Activated CD4-positive, alpha-beta memory T cell treated with anti-CD3 and anti-CD28 coated beads, Interleukin-2, amount 10 ng/mL, durations not matched to agents 7 days and 5 days (primary cell): ENCODE measurements at regions of chr3 and their contacts with region 1.

Region 1: GRCh38 chr3:129249276-129250065 is at the start of gene COPG1:
- DNase-seq: peak; percentile 90
- H3K4me3 Mint-ChIP-seq: peak within 1 kb of the TSS; percentile 86
- H3K27ac Mint-ChIP-seq: peak within 1 kb of the TSS; percentile 92
- H3K4me1 Mint-ChIP-seq: peaks cover 63% of the 10 kb centered on the region
- H3K27me3 Mint-ChIP-seq: no peaks in the 10 kb centered on the region
- total RNA-seq, gene COPG1: 157 TPM

Region 2: DNA sequence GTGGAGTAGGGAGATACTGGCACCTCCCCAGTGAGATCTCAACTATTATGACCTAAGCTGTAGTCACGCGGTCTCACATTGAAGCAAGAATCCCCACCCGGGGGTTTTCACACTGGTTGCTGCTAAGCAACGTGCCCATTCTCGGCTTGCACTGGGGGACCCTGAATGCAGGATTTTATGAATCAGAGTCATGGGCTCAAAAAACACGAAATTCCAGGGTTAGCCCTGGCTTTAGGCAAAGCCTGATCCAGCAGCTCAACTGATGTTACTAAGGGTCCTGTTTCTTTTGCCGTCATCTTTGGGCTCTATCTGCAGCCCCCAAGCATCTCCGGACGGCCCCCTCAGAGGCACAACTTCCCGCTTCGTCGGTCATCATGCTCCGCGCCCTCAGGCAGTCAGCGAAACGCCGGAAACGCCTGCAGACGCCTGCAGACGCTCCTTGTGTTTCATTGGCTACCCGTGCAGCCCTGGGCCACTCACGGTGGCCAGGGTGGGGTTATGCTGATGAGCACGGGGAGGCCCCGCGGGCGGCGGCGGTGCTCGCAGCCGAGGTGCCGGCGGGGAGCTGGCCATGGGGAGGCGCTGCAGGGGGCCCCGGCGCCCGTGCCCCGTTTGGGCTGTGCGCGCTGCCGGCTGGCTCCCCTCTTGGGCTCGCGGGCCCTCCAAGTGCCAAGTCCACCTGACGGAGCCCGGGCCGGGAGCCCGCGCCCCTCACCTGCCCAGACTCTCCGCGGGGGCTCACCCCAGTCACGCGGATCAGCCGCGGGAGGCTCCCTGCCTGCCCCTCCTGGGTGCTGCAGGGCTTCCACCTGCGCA is 222.5 kb before region 1 on chr3:
- CTCF ChIA-PET with region 1: interaction called, 12 read pairs
- POLR2A ChIA-PET with region 1: interaction called, 11 read pairs
- DNase-seq: peak; percentile 95
- H3K4me3 Mint-ChIP-seq: peak overlapping the region; percentile 69
- H3K27ac Mint-ChIP-seq: peak overlapping the region; percentile 70
- H3K4me1 Mint-ChIP-seq: peaks cover 14% of the 10 kb centered on the region
- H3K27me3 Mint-ChIP-seq: peaks cover 6% of the 10 kb centered on the region

Region 3: DNA sequence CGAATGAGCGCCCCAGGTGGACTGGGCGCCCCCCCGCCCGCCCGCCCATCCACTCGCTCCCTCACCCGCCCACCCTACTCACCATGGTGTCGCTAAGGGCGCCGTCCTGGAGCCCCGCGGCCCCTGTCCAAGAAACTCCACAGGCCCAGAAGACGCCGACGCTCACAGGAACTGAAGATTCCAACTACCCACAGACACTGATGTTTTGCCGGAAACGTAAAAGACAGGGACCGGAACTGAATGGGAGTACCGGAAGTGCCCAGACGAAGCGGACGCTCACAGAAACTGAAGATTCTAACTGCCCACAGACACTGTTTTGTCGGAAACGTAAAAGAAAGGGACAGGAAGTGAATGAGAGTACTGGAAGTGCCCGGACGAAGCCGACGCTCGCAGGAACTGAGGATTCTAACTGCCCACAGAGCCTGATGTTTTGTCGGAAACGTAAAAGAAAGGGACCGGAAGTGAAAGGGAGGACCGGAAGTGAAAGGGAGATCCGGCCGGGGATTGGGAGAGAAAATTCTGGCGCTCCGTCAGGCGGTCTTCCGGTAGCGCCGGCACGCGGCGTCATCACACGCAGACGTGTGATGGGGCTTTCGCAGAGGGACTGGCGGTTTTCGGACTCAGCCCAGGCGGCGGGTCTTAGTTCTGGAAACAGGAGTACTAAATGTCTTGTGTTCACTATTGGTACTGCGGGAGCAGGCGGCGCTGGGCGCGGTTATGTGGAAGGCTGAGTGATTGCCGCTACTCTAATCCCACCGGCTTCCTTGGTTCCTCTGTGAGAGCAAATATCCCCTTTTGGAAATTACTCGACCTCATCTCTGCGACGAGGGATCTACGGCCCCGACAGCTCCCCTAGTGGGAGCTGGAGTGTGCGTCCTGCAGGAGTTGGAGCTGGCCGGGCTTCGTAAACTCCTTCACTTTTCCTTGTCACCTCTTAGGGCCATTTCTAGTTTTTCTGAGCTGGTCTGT is 88.3 kb before region 1 on chr3 and contains the start of gene ISY1:
- CTCF ChIA-PET with region 1: interaction called, 17 read pairs
- POLR2A ChIA-PET with region 1: interaction called, 49 read pairs
- DNase-seq: peak; percentile 88
- H3K4me3 Mint-ChIP-seq: peak within 1 kb of the TSS; percentile 87
- H3K27ac Mint-ChIP-seq: peak within 1 kb of the TSS; percentile 94
- H3K4me1 Mint-ChIP-seq: peaks cover 45% of the 10 kb centered on the region
- H3K27me3 Mint-ChIP-seq: no peaks in the 10 kb centered on the region
- total RNA-seq, gene ISY1: 63.9 to 66.2 TPM

Region 4: GRCh38 chr3:129183569-129184395 is 65.7 kb before region 1 on chr3 and contains the start of gene CNBP:
- CTCF ChIA-PET with region 1: interaction called, 71 read pairs
- POLR2A ChIA-PET with region 1: interaction called, 393 read pairs
- DNase-seq: peak; percentile 93
- H3K4me3 Mint-ChIP-seq: peak within 1 kb of the TSS; percentile 94
- H3K27ac Mint-ChIP-seq: peak within 1 kb of the TSS; percentile 93
- H3K4me1 Mint-ChIP-seq: peaks cover 48% of the 10 kb centered on the region
- H3K27me3 Mint-ChIP-seq: no peaks in the 10 kb centered on the region
- total RNA-seq, gene CNBP: 321 to 322 TPM

Region 5: GRCh38 chr3:129238945-129239706 is 10.3 kb before region 1 on chr3:
- CTCF ChIA-PET with region 1: interaction called, 8 read pairs
- POLR2A ChIA-PET with region 1: interaction called, 62 read pairs
- DNase-seq: peak; percentile 64
- H3K4me3 Mint-ChIP-seq: peak overlapping the region; percentile 59
- H3K27ac Mint-ChIP-seq: peak overlapping the region; percentile 97
- H3K4me1 Mint-ChIP-seq: peaks cover 59% of the 10 kb centered on the region
- H3K27me3 Mint-ChIP-seq: no peaks in the 10 kb centered on the region